ENCODE measurements at regions of chr2 and their contacts with region 1.

Region 1: GRCh38 chr2:10072656-10073480 is 7.3 kb downstream of the CYS1 start:
- DNase-seq: peak; percentile 36
- H3K4me3 ChIP-seq: no peak overlapping the region
- CTCF ChIP-seq: peak; percentile 84

Region 2: GRCh38 chr2:10043906-10044601 is 28.8 kb before region 1 on chr2:
- CTCF ChIA-PET with region 1: interaction called, 21 read pairs
- POLR2A ChIA-PET with region 1: no interaction called
- DNase-seq: no peak
- H3K4me3 ChIP-seq: peak overlapping the region; percentile 64
- CTCF ChIP-seq: no peak

Region 3: GRCh38 chr2:10091182-10091888 is 18.5 kb after region 1 on chr2:
- CTCF ChIA-PET with region 1: interaction called, 173 read pairs
- POLR2A ChIA-PET with region 1: no interaction called
- DNase-seq: no peak
- H3K4me3 ChIP-seq: no peak overlapping the region
- CTCF ChIP-seq: no peak

Region 4: DNA sequence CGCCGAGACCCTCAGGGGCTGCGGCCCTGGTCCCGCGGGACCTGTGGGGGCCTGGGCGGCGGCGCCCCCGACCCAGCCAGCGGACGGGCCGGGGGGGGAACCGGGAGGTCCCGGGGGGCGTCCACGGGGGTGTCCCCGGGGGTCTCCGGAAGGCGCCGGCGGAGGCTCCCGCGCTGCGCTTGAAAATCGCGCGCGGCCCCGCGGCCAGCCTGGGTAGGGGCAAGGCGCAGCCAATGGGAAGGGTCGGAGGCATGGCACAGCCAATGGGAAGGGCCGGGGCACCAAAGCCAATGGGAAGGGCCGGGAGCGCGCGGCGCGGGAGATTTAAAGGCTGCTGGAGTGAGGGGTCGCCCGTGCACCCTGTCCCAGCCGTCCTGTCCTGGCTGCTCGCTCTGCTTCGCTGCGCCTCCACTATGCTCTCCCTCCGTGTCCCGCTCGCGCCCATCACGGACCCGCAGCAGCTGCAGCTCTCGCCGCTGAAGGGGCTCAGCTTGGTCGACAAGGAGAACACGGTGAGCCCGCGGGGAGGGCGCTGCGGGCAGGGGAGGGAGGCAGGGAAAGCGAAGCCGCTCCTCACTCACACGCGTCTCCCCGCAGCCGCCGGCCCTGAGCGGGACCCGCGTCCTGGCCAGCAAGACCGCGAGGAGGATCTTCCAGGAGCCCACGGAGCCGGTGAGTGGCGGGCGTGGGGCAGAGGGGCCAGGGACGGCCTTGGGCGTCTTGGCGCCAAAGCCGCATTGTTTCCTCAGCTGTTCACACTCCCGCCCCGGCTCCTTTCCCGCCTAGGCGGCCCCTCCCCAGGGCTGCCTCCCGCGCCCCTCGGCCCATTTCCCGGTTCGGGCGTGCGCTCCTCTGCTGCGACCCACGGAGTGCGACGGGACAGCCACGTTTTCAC is 49.8 kb after region 1 on chr2 and contains the start of gene RRM2:
- CTCF ChIA-PET with region 1: interaction called, 35 read pairs
- POLR2A ChIA-PET with region 1: no interaction called
- DNase-seq: no peak
- H3K4me3 ChIP-seq: peak within 1 kb of the TSS; percentile 78
- CTCF ChIP-seq: no peak

Region 5: GRCh38 chr2:10448208-10448645 is 375.4 kb after region 1 on chr2 and contains the start of gene ODC1:
- CTCF ChIA-PET with region 1: interaction called, 21 read pairs
- POLR2A ChIA-PET with region 1: no interaction called
- DNase-seq: peak; percentile 31
- H3K4me3 ChIP-seq: peak within 1 kb of the TSS; percentile 72
- CTCF ChIP-seq: no peak

Measured in AG04449 (cell line).